ENCODE measurements at regions of chr16 and their contacts with region 1.

Region 1: GRCh38 chr16:64964126-64964540 is 157.7 kb downstream of the CDH11 start:
- DNase-seq: peak; percentile 85
- H3K4me3 ChIP-seq: no peak overlapping the region
- H3K27ac ChIP-seq: peak overlapping the region; percentile 94
- H3K4me1 ChIP-seq: peaks cover 20% of the 10 kb centered on the region
- H3K27me3 ChIP-seq: no peaks in the 10 kb centered on the region
- CTCF ChIP-seq: no peak
- POLR2A ChIP-seq: no peak

Region 2: GRCh38 chr16:64478252-64478906 is 485.8 kb before region 1 on chr16:
- CTCF ChIA-PET with region 1: no interaction called
- POLR2A ChIA-PET with region 1: no interaction called
- dilution Hi-C with region 1: no loop called
- intact Hi-C with region 1: loop called (anchors 10 kb)
- DNase-seq: peak; percentile 90
- H3K4me3 ChIP-seq: no peak overlapping the region
- H3K27ac ChIP-seq: peak overlapping the region; percentile 48
- H3K4me1 ChIP-seq: peaks cover 19% of the 10 kb centered on the region
- H3K27me3 ChIP-seq: no peaks in the 10 kb centered on the region
- CTCF ChIP-seq: no peak
- POLR2A ChIP-seq: no peak

Region 3: DNA sequence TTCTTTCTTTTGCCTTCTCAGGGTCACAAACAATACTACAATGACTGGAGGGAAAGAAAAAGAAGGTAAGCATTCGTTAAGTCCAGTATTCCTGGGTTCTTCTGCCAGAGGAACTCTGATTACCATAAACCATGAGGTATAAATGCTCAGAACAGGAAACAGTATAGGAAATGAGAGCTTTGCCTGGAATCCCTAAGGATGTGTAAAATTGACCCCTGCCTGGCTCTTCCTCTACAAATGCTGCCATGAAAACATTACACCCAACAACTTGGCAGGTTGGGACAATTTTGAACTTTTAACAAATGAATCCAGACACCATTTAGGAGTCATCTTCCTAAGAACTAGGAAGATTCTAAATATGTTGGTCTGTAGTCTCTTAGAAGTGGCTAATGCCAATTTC is 16.1 kb before region 1 on chr16:
- CTCF ChIA-PET with region 1: interaction called, 3 read pairs
- POLR2A ChIA-PET with region 1: no interaction called
- dilution Hi-C with region 1: no loop called
- intact Hi-C with region 1: loop called (anchors 1 kb)
- DNase-seq: peak; percentile 55
- H3K4me3 ChIP-seq: no peak overlapping the region
- H3K27ac ChIP-seq: peak overlapping the region; percentile 30
- H3K4me1 ChIP-seq: peaks cover 14% of the 10 kb centered on the region
- H3K27me3 ChIP-seq: no peaks in the 10 kb centered on the region
- CTCF ChIP-seq: no peak
- POLR2A ChIP-seq: no peak

Region 4: GRCh38 chr16:64983963-64984362 is 19.8 kb after region 1 on chr16:
- CTCF ChIA-PET with region 1: interaction called, 3 read pairs
- POLR2A ChIA-PET with region 1: no interaction called
- dilution Hi-C with region 1: no loop called
- intact Hi-C with region 1: loop called (anchors 1 kb)
- DNase-seq: peak; percentile 80
- H3K4me3 ChIP-seq: no peak overlapping the region
- H3K27ac ChIP-seq: no peak overlapping the region
- H3K4me1 ChIP-seq: no peaks in the 10 kb centered on the region
- H3K27me3 ChIP-seq: no peaks in the 10 kb centered on the region
- CTCF ChIP-seq: peak; percentile 74 to 79
- POLR2A ChIP-seq: no peak

Region 5: DNA sequence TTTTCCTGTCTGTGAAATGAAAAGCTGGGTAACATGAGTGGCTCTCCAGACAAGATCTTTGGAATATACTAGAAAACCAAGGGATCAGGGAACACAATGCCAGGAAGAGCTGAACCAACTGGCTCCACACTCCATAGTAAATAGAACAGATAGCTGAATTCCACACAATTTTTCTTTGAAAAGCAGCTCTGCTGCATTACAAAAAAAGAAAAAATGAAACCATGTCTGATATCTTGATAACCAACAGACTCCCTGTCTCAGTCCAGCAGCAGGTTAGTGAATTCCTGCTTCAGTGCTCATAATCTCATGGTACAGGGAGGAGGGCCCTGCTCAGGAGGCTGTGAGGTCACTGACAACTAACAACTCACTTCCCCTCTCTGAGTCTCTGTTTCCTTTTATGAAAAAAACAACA is 60.6 kb after region 1 on chr16:
- CTCF ChIA-PET with region 1: interaction called, 3 read pairs
- POLR2A ChIA-PET with region 1: no interaction called
- dilution Hi-C with region 1: no loop called
- intact Hi-C with region 1: loop called (anchors 1 kb)
- DNase-seq: peak; percentile 92
- H3K4me3 ChIP-seq: no peak overlapping the region
- H3K27ac ChIP-seq: peak overlapping the region; percentile 91
- H3K4me1 ChIP-seq: peaks cover 23% of the 10 kb centered on the region
- H3K27me3 ChIP-seq: no peaks in the 10 kb centered on the region
- CTCF ChIP-seq: no peak
- POLR2A ChIP-seq: peak; percentile 23